Activated B cell treated with CpG ODN at 0.5 μM for 24 hours (primary cell): ENCODE measurements at regions of chr7 and their contacts with region 1.

Region 1: GRCh38 chr7:4725014-4725849 is 43.1 kb downstream of the FOXK1 start:
- DNase-seq: peak; percentile 39
- ATAC-seq: peak; percentile 76
- H3K4me3 Mint-ChIP-seq: peak overlapping the region; percentile 90
- H3K27ac Mint-ChIP-seq: peak overlapping the region; percentile 84
- H3K4me1 Mint-ChIP-seq: peaks cover 52% of the 10 kb centered on the region
- H3K27me3 Mint-ChIP-seq: no peaks in the 10 kb centered on the region
- CTCF ChIP-seq: no peak

Region 2: GRCh38 chr7:4712281-4713182 is 12.7 kb before region 1 on chr7:
- CTCF ChIA-PET with region 1: interaction called, 3 read pairs
- POLR2A ChIA-PET with region 1: interaction called, 17 read pairs
- intact Hi-C with region 1: loop called (anchors 1 kb)
- DNase-seq: no peak
- ATAC-seq: peak; percentile 78
- H3K4me3 Mint-ChIP-seq: peak overlapping the region; percentile 75
- H3K27ac Mint-ChIP-seq: peak overlapping the region; percentile 73
- H3K4me1 Mint-ChIP-seq: peaks cover 50% of the 10 kb centered on the region
- H3K27me3 Mint-ChIP-seq: no peaks in the 10 kb centered on the region
- CTCF ChIP-seq: no peak

Region 3: DNA sequence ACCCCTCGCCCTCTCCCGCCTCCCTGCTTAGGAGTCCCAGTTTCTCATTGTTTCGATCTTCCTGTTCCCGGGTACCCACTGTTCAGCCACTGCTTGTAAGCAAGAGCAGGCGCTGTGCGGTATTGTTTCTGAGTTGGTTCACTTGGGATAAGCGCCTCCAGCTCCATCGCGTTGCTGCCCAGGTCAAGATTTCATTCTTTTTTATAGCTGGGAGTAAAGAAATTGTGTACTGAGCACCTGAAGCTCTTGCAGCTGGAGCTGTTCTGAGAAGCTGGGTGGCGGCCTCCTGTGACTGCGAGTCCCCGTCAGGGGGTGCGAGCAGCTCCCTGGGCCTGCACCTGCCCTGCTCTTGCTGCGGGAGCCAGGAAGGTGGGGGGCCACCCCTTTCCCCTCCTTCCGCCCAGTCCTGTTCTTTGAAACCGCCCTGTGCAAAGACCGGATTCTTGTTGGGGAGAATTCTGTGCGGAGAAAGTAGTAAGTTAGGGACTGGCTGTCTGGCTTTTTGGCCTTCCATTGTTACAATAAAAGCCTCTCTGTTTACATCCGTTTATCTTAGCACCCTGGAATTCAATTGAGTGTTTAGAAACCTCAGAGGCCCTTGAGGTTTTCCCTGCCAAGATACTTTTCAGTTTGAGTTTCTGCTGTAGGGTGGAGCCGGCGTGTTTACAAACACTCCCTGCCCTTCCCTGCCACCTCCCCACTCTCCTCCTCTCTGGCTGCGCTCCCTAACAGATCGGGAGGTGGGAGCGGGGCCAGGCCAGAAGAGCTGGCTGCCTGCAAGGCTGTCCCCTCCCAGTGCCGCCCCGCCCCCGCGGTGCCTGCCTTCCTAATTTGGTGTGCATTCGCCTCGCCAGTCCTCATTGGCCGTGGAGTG is 19.4 kb after region 1 on chr7:
- CTCF ChIA-PET with region 1: no interaction called
- POLR2A ChIA-PET with region 1: interaction called, 21 read pairs
- intact Hi-C with region 1: no loop called
- DNase-seq: peak; percentile 67
- ATAC-seq: peak; percentile 82
- H3K4me3 Mint-ChIP-seq: peak overlapping the region; percentile 81
- H3K27ac Mint-ChIP-seq: peak overlapping the region; percentile 92
- H3K4me1 Mint-ChIP-seq: peaks cover 58% of the 10 kb centered on the region
- H3K27me3 Mint-ChIP-seq: no peaks in the 10 kb centered on the region
- CTCF ChIP-seq: no peak

Region 4: GRCh38 chr7:5276611-5277010 is 551.4 kb after region 1 on chr7:
- CTCF ChIA-PET with region 1: no interaction called
- POLR2A ChIA-PET with region 1: no interaction called
- intact Hi-C with region 1: no loop called
- DNase-seq: no peak
- ATAC-seq: no peak
- H3K4me3 Mint-ChIP-seq: no peak overlapping the region
- H3K27ac Mint-ChIP-seq: no peak overlapping the region
- H3K4me1 Mint-ChIP-seq: no peaks in the 10 kb centered on the region
- H3K27me3 Mint-ChIP-seq: peaks cover 5% of the 10 kb centered on the region
- CTCF ChIP-seq: no peak